Endothelial cell of umbilical vein (primary cell): ENCODE measurements at regions of chr2 and their contacts with region 1.

Region 1: DNA sequence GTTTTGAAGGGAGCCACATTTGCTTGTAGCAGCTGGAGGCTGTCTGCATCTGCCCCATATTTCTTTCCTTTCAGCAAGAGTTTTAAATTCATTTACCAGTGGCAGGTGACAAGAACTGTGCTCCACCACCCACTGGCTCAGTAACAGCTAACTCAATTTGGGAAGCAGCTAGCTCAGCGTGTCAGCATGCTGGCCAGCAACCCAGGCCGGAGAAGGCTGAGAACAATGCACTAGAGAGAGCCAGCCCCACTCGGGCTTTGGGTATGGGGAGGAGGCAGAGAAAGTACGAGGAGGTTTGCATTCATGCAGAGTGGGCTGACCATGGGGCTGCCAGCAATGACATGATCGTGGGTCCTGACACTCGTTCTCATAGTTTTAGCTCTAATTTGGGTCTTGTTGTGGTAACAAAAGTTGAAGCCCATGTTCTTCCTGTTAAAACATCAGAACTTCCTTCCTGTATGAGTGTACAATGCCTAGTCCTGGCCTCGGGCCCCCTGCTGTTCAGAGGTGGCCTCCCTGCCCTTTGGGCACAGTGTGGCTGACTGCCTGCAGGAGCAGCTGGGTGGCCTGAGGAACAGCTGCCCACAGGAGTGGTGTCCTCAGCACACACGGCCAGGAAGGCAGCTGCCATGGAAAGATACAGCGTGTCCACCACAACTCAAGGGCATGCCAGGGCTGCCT is 23.0 kb downstream of the CDC42EP3 start:
- DNase-seq: peak; percentile 80
- H3K4me3 ChIP-seq: no peak overlapping the region
- H3K27ac ChIP-seq: peak overlapping the region; percentile 68
- H3K4me1 ChIP-seq: peaks cover 80% of the 10 kb centered on the region
- H3K27me3 ChIP-seq: no peaks in the 10 kb centered on the region
- CTCF ChIP-seq: peak; percentile 33 to 41
- POLR2A ChIP-seq: no peak

Region 2: DNA sequence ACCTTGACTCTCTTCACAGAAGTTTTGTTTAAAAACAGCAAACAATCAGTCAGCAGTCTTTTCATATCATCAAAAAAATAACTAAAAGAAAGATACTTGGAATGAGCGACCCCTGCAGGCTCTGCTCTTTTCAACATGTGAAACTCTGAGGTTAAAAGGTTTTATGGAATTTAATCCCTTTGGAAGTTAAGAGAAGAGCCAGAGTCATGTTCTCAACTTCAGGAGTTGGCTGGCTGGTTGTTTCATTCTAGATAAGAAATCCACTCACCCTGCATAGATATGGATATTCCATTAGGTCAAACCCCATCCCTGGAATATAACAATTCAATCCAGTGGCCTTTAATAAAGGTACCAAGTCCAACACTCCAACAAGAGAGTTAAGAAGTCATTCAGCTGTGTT is 161.1 kb after region 1 on chr2:
- CTCF ChIA-PET with region 1: interaction called, 6 read pairs
- POLR2A ChIA-PET with region 1: no interaction called
- dilution Hi-C with region 1: no loop called
- intact Hi-C with region 1: loop called (anchors 1 kb)
- DNase-seq: peak; percentile 77
- H3K4me3 ChIP-seq: no peak overlapping the region
- H3K27ac ChIP-seq: no peak overlapping the region
- H3K4me1 ChIP-seq: peaks cover 13% of the 10 kb centered on the region
- H3K27me3 ChIP-seq: no peaks in the 10 kb centered on the region
- CTCF ChIP-seq: peak; percentile 42 to 45
- POLR2A ChIP-seq: no peak